ENCODE measurements at regions of chr21 and their contacts with region 1.

Region 1: DNA sequence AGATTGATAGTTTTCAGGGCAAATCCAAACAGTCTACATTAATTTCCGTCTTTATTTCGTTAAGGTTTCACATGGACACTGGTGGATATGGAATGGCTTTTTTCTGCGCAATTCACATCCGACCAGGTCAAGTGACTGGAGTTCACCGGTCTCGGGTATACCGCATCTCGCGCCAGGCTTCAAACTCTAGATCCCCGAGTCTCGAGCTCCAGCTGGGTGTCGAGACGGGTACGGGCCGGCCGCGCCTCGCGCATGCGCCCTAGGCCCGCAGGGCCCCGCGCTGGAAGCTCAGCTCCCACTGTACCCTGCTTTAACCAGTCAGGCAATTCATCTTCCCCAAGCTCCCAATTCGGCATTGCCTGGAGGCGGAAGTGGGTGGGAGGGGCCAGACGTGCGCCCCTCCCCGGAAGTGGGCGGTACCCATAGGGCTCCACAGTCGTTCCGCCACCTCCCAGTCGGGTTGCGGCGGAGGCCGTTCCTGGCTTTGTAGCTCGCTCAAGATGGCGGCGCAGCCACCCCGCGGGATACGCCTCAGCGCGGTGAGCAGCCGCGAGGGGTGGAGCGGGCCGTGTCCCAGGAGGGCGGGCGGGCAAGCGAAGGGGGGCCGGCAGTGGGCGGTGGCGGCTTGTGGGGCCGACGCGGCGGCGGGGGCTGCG is at the start of gene MORC3:
- DNase-seq: peak; percentile 98
- ATAC-seq: peak; percentile 92
- H3K4me3 Mint-ChIP-seq: peak within 1 kb of the TSS; percentile 96
- H3K27ac Mint-ChIP-seq: peak within 1 kb of the TSS; percentile 98
- H3K4me1 Mint-ChIP-seq: peaks cover 28% of the 10 kb centered on the region
- H3K27me3 Mint-ChIP-seq: no peaks in the 10 kb centered on the region
- total RNA-seq, gene MORC3: 46.7 to 53.7 TPM

Region 2: DNA sequence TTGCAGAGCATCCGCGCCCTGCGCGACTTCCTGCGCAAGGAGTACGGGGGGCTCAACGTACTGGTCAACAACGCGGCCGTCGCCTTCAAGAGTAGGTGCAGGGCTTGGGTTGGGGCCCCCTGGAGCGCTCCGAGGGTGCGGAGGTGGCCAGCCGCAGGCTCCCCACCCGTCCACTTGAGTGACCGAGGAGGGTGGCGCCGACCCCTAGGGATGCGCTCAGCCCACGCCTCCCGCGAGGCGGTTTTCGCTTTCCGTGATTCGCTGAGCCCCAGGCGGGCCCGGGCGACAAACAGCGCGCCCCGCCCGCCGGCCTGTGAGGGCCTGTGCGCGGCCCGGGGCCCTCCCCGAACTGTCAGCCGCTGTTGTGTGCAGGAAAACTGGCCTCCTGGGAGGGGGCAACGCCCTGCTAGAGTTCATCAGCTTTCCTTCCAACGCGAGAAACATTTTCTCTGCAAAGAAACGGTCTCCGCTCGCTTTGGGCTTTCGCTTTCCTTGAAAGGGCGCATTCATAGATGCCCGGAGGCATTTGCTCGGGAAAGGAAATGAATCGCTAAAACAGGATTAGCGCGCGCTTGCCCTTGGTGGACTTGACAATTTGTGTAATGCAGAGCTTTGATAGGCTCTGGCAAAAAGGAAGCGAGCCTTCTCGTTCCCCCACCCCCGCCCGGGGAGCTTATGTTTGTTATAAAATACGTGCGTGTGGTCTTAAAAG is 184.3 kb before region 1 on chr21:
- POLR2A ChIA-PET with region 1: interaction called, 28 read pairs
- DNase-seq: peak; percentile 84
- ATAC-seq: peak; percentile 92
- H3K4me3 Mint-ChIP-seq: peak overlapping the region; percentile 94
- H3K27ac Mint-ChIP-seq: peak overlapping the region; percentile 91
- H3K4me1 Mint-ChIP-seq: peaks cover 25% of the 10 kb centered on the region
- H3K27me3 Mint-ChIP-seq: peaks cover 2% of the 10 kb centered on the region

Region 3: GRCh38 chr21:36156339-36156814 is 163.5 kb before region 1 on chr21:
- POLR2A ChIA-PET with region 1: interaction called, 12 read pairs
- DNase-seq: peak; percentile 100
- ATAC-seq: peak; percentile 86
- H3K4me3 Mint-ChIP-seq: peak overlapping the region; percentile 81
- H3K27ac Mint-ChIP-seq: peak overlapping the region; percentile 60
- H3K4me1 Mint-ChIP-seq: peaks cover 22% of the 10 kb centered on the region
- H3K27me3 Mint-ChIP-seq: no peaks in the 10 kb centered on the region

Region 4: DNA sequence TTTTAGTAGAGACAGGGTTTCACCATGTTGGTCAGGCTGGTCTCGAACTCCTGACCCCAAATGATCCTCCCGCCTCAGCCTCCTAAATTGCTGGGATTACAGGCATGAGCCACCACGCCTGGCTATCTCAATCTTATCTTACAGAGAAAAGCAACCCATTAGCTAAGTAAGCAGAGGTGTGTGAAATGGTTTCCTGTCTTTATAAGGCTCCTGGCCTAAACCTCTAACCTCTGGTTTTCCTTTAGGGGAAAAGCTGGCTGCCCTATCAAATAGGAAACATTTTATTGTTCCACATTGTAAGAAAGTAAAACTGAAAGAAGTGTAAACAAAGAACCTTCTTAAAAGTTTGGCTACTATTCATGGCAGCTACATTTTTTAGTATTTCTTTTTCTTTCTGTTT is 78.2 kb before region 1 on chr21:
- POLR2A ChIA-PET with region 1: interaction called, 15 read pairs
- DNase-seq: no peak
- ATAC-seq: peak; percentile 41
- H3K4me3 Mint-ChIP-seq: no peak overlapping the region
- H3K27ac Mint-ChIP-seq: no peak overlapping the region
- H3K4me1 Mint-ChIP-seq: peaks cover 12% of the 10 kb centered on the region
- H3K27me3 Mint-ChIP-seq: no peaks in the 10 kb centered on the region

Region 5: DNA sequence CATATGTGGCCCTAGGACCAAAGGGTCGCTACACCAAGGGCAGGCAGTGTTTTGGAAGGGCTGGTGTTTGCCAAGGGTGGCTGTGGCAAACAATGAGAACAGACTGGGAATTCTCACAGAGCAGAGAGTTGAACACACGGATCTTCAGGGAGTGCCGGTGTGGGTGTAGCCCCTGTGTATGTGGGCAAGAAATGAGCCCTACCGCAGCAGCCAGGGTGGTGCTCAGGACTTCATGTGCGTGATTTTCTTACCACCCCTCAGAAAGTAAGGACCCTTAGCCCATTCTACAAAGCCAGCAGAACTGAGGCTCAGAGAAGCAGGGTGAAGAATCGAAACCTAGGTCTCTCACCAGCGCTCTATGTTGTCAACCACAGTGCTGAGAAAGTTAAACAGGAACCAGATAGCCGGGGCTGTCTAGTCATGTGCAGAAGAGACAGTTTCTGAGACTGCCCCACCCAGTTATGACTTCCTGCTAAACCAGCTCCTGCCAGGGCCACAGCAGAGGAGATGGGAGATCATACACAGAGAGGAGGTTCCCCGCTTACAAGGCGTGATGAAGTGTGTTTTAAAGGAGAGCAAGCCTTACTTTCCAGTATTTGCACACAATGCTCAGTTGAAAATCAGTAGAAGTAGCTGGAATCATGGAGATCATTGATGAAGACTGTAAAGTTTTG is 21.8 kb before region 1 on chr21:
- POLR2A ChIA-PET with region 1: interaction called, 140 read pairs
- DNase-seq: peak; percentile 57
- ATAC-seq: peak; percentile 100
- H3K4me3 Mint-ChIP-seq: peak overlapping the region; percentile 82
- H3K27ac Mint-ChIP-seq: peak overlapping the region; percentile 98
- H3K4me1 Mint-ChIP-seq: peaks cover 26% of the 10 kb centered on the region
- H3K27me3 Mint-ChIP-seq: no peaks in the 10 kb centered on the region

Measured in activated naive CD8-positive, alpha-beta T cell treated with anti-CD3 and anti-CD28 coated beads, Interleukin-2, amount 10 ng/mL, durations not matched to agents 7 days and 5 days (primary cell).